Activated T-helper 1 cell treated with anti-CD3 and anti-CD28 coated beads, Interleukin-12 subunit alpha, Interleukin-12 subunit beta, Interleukin-2, Interleukin-4 antibody, amounts not matched to agents 30 ng/mL and 10 ng/mL and 1 ng/mL, durations not matched to agents 14 hours and 24 hours and 36 hours (primary cell): ENCODE measurements at regions of chr20 and their contacts with region 1.

Region 1: DNA sequence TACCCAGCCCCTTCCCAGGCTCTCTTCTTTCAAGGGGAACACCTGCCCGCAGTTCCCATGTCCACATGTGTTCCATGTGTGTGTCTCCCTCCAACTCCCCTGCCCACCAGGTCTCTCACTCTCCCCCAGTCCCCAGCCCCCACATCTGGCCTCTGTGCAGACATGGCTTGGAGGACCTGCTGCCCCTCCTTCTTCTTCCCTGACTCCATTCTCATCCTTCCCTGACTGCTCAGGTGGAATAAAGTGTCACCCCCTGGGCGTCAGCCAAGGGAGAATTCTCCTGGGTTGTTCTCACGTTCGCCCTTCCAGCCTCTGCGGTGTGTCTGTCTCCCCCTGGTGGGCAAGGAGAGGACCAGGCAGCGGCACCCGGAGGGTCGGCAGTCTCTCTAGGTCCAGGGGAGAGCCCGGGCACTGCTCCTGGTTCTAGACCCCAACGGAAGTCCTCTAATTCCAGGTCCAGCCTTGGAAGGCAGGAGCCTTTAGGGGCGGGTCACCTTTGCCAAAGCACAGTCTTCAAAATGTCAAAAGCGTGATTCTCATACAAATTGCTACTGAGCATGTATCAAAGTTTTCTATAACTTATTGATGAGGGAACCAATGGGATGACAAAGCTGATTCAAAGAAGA is 50.5 kb downstream of the EBF4 start:
- DNase-seq: peak; percentile 65
- H3K4me3 Mint-ChIP-seq: peak overlapping the region; percentile 45
- H3K27ac Mint-ChIP-seq: peak overlapping the region; percentile 80
- H3K4me1 Mint-ChIP-seq: peaks cover 30% of the 10 kb centered on the region
- H3K27me3 Mint-ChIP-seq: peaks cover 17% of the 10 kb centered on the region

Region 2: GRCh38 chr20:2558581-2559278 is 184.3 kb before region 1 on chr20:
- intact Hi-C with region 1: no loop called
- DNase-seq: no peak
- H3K4me3 Mint-ChIP-seq: no peak overlapping the region
- H3K27ac Mint-ChIP-seq: no peak overlapping the region
- H3K4me1 Mint-ChIP-seq: no peaks in the 10 kb centered on the region
- H3K27me3 Mint-ChIP-seq: peaks cover 62% of the 10 kb centered on the region

Region 3: DNA sequence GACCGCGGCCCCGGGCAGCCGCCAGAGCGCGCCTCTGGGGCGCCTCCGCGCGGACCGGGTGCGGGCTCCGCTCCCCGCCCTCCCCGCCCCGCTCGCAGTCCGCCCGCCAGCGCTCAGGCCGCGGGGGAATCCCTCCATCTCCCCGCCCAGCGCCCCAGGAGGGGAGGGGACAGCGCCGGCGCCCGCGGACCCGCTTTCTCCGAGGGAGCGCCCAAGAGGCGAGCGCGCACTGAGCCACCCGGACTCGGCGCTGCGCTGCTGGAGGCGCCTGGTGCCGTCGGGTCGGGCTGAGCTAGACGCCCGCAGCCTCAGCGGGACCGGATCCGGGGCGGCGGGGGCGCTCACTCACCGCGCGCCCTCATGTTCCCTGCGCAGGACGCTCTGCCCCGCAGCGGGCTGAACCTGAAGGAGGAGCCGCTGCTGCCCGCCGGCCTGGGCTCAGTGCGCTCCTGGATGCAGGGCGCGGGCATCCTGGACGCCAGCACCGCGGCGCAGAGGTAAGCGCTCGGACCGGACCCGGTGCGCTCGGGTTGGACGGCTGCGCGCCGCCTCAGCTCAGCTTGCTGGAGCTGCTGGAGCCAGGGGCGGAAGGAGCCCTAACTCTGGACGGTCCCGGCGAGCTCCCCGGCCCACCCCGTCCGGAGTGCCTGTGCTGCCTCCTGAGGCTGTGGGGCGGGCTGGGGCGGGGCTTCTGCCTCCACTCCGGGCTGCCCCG is 49.6 kb before region 1 on chr20:
- intact Hi-C with region 1: loop called (anchors 1 kb)
- DNase-seq: peak; percentile 53
- H3K4me3 Mint-ChIP-seq: peak overlapping the region; percentile 2
- H3K27ac Mint-ChIP-seq: no peak overlapping the region
- H3K4me1 Mint-ChIP-seq: peaks cover 24% of the 10 kb centered on the region
- H3K27me3 Mint-ChIP-seq: peaks cover 36% of the 10 kb centered on the region